ENCODE measurements at regions of chr9 and their contacts with region 1.

Region 1: DNA sequence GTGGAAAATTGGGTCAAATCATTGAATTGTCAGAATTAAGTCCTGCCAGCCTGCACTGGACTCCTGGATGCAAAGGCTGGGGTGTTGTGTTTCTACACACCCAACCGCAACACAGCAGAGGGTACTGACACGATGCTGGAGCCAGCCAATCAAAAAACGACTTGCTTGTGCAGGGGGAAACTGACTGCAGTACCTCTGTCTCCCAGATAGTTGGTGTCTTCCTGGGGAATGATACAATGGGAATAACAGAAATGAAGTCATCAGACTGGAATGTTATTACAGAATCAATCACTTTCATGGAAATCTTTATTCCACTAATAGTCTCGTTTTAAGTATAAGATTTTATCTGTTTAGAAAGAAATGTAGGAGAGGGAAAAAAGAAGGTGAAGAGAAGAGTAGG is 330.3 kb downstream of the MLLT3 start:
- DNase-seq: no peak
- ATAC-seq: no peak
- H3K4me3 ChIP-seq: no peak overlapping the region
- H3K4me3 Mint-ChIP-seq: no peak overlapping the region
- H3K27ac ChIP-seq: no peak overlapping the region
- H3K27ac Mint-ChIP-seq: no peak overlapping the region
- H3K4me1 ChIP-seq: no peaks in the 10 kb centered on the region
- H3K4me1 Mint-ChIP-seq: peaks cover 5% of the 10 kb centered on the region
- H3K27me3 ChIP-seq: no peaks in the 10 kb centered on the region
- H3K27me3 Mint-ChIP-seq: no peaks in the 10 kb centered on the region
- CTCF ChIP-seq: no peak

Region 2: DNA sequence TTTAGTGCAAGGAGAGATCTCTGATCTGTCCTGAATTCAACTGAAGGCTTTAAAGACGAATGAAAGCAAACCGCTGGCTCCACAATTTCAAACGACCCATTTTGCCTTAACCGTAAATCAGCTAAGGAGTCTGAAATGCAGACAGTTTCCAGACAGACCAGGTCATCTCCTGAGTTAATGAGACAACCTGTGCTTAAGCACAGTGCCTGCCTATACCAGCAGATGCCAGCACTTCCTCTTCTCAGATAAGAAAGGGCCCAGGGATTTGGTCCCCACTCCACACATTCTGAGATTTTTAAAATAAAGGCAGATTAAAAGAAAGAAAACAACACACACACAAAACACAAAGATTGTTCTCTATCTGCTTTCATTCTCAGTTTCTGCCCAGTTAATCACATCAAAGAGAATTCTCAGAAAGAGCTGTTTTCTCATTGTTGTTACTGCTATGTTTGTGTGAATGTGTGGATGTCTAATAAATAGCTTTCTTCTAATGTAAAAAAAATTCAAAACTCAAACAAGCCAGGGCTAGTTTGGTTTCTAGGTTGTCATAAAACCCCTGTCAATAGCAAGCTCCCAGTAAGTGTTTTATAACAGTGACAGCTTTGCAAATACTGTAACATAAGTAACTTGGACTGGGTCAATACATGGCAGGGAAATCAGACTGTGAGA is 345.4 kb before region 1 on chr9:
- CTCF ChIA-PET with region 1: no interaction called
- POLR2A ChIA-PET with region 1: no interaction called
- intact Hi-C with region 1: no loop called
- DNase-seq: peak in 1 of 9 experiments; percentile 27
- ATAC-seq: no peak
- H3K4me3 ChIP-seq: no peak overlapping the region
- H3K4me3 Mint-ChIP-seq: no peak overlapping the region
- H3K27ac ChIP-seq: no peak overlapping the region
- H3K27ac Mint-ChIP-seq: no peak overlapping the region
- H3K4me1 ChIP-seq: no peaks in the 10 kb centered on the region
- H3K4me1 Mint-ChIP-seq: no peaks in the 10 kb centered on the region
- H3K27me3 ChIP-seq: peaks cover 0 to 2% of the 10 kb centered on the region in 2 experiments
- H3K27me3 Mint-ChIP-seq: peaks cover 13% of the 10 kb centered on the region
- CTCF ChIP-seq: no peak

Region 3: GRCh38 chr9:20271096-20271495 is 20.9 kb before region 1 on chr9:
- CTCF ChIA-PET with region 1: no interaction called
- POLR2A ChIA-PET with region 1: no interaction called
- intact Hi-C with region 1: loop called in 1 of 2 experiments (anchors 1 kb)
- DNase-seq: peak in 2 of 9 experiments; percentile 4 to 9
- ATAC-seq: no peak
- H3K4me3 ChIP-seq: no peak overlapping the region
- H3K4me3 Mint-ChIP-seq: no peak overlapping the region
- H3K27ac ChIP-seq: no peak overlapping the region
- H3K27ac Mint-ChIP-seq: no peak overlapping the region
- H3K4me1 ChIP-seq: no peaks in the 10 kb centered on the region
- H3K4me1 Mint-ChIP-seq: peaks cover 4% of the 10 kb centered on the region
- H3K27me3 ChIP-seq: no peaks in the 10 kb centered on the region
- H3K27me3 Mint-ChIP-seq: no peaks in the 10 kb centered on the region
- CTCF ChIP-seq: no peak

Region 4: DNA sequence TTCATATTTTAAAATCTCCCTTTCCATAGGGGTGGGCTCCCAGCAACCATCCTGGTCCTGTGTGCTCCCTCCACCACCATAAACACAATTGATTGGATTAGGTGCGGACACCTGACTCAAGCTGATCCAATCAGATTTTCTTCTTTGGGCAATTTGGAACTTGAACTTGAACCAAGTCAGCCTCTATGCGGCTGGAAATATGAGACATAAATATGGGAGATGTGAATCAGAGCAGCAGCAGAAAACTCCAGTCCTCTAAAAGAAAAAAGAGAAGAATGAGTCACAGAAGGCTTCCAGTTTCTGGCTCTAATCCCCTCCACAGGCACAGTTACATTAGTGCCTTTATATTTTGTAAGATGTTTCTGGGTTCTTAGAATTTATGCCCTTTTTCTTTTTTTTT is 23.7 kb after region 1 on chr9:
- CTCF ChIA-PET with region 1: no interaction called
- POLR2A ChIA-PET with region 1: no interaction called
- intact Hi-C with region 1: no loop called
- DNase-seq: no peak
- ATAC-seq: no peak
- H3K4me3 ChIP-seq: no peak overlapping the region
- H3K4me3 Mint-ChIP-seq: no peak overlapping the region
- H3K27ac ChIP-seq: peak overlapping the region; percentile 2 to 30
- H3K27ac Mint-ChIP-seq: peak overlapping the region; percentile 58
- H3K4me1 ChIP-seq: peaks cover 36% of the 10 kb centered on the region
- H3K4me1 Mint-ChIP-seq: peaks cover 58% of the 10 kb centered on the region
- H3K27me3 ChIP-seq: no peaks in the 10 kb centered on the region
- H3K27me3 Mint-ChIP-seq: no peaks in the 10 kb centered on the region
- CTCF ChIP-seq: no peak

Region 5: GRCh38 chr9:20340511-20340861 is 48.5 kb after region 1 on chr9:
- CTCF ChIA-PET with region 1: no interaction called
- POLR2A ChIA-PET with region 1: no interaction called
- intact Hi-C with region 1: loop called in 1 of 2 experiments (anchors 5 kb)
- DNase-seq: no peak
- ATAC-seq: no peak
- H3K4me3 ChIP-seq: no peak overlapping the region
- H3K4me3 Mint-ChIP-seq: no peak overlapping the region
- H3K27ac ChIP-seq: no peak overlapping the region
- H3K27ac Mint-ChIP-seq: no peak overlapping the region
- H3K4me1 ChIP-seq: no peaks in the 10 kb centered on the region
- H3K4me1 Mint-ChIP-seq: peaks cover 23% of the 10 kb centered on the region
- H3K27me3 ChIP-seq: no peaks in the 10 kb centered on the region
- H3K27me3 Mint-ChIP-seq: no peaks in the 10 kb centered on the region
- CTCF ChIP-seq: no peak

Region 6: GRCh38 chr9:20373263-20373662 is 81.3 kb after region 1 on chr9:
- CTCF ChIA-PET with region 1: no interaction called
- POLR2A ChIA-PET with region 1: no interaction called
- intact Hi-C with region 1: no loop called
- DNase-seq: no peak
- ATAC-seq: no peak
- H3K4me3 ChIP-seq: no peak overlapping the region
- H3K4me3 Mint-ChIP-seq: no peak overlapping the region
- H3K27ac ChIP-seq: no peak overlapping the region
- H3K27ac Mint-ChIP-seq: peak overlapping the region; percentile 71
- H3K4me1 ChIP-seq: peaks cover 30% of the 10 kb centered on the region
- H3K4me1 Mint-ChIP-seq: peaks cover 75% of the 10 kb centered on the region
- H3K27me3 ChIP-seq: no peaks in the 10 kb centered on the region
- H3K27me3 Mint-ChIP-seq: no peaks in the 10 kb centered on the region
- CTCF ChIP-seq: no peak

Measured in CD8-positive, alpha-beta T cell (primary cell).